IMR-90 (cell line): ENCODE measurements at regions of chr11 and their contacts with region 1.

Region 1: GRCh38 chr11:74988541-74989260 is at the start of gene NEU3:
- DNase-seq: peak; percentile 69
- ATAC-seq: peak; percentile 96
- H3K4me3 ChIP-seq: peak within 1 kb of the TSS; percentile 87
- H3K27ac ChIP-seq: peak within 1 kb of the TSS; percentile 42
- H3K4me1 ChIP-seq: no peaks in the 10 kb centered on the region
- H3K27me3 ChIP-seq: no peaks in the 10 kb centered on the region
- CTCF ChIP-seq: no peak
- POLR2A ChIP-seq: peak; percentile 75
- RAD21 ChIP-seq: no peak
- total RNA-seq, gene NEU3: 8.3 and 10.6 TPM in 2 replicates

Region 2: GRCh38 chr11:74948898-74949747 is 39.6 kb before region 1 on chr11 and contains the starts of genes SPCS2 and XRRA1:
- CTCF ChIA-PET with region 1: no interaction called
- POLR2A ChIA-PET with region 1: no interaction called
- dilution Hi-C with region 1: no loop called
- in situ Hi-C with region 1: no loop called
- intact Hi-C with region 1: loop called (anchors 2 kb)
- DNase-seq: peak; percentile 99
- ATAC-seq: peak; percentile 98
- H3K4me3 ChIP-seq: peak within 1 kb of the TSS; percentile 88
- H3K27ac ChIP-seq: peak within 1 kb of the TSS; percentile 79
- H3K4me1 ChIP-seq: peaks cover 3% of the 10 kb centered on the region
- H3K27me3 ChIP-seq: no peaks in the 10 kb centered on the region
- CTCF ChIP-seq: no peak
- POLR2A ChIP-seq: peak; percentile 90
- RAD21 ChIP-seq: no peak
- total RNA-seq, gene SPCS2: 13.3 and 15.4 TPM in 2 replicates
- total RNA-seq, gene XRRA1: 5.0 and 6.3 TPM in 2 replicates